ENCODE measurements at regions of chr7 and their contacts with region 1.

Region 1: DNA sequence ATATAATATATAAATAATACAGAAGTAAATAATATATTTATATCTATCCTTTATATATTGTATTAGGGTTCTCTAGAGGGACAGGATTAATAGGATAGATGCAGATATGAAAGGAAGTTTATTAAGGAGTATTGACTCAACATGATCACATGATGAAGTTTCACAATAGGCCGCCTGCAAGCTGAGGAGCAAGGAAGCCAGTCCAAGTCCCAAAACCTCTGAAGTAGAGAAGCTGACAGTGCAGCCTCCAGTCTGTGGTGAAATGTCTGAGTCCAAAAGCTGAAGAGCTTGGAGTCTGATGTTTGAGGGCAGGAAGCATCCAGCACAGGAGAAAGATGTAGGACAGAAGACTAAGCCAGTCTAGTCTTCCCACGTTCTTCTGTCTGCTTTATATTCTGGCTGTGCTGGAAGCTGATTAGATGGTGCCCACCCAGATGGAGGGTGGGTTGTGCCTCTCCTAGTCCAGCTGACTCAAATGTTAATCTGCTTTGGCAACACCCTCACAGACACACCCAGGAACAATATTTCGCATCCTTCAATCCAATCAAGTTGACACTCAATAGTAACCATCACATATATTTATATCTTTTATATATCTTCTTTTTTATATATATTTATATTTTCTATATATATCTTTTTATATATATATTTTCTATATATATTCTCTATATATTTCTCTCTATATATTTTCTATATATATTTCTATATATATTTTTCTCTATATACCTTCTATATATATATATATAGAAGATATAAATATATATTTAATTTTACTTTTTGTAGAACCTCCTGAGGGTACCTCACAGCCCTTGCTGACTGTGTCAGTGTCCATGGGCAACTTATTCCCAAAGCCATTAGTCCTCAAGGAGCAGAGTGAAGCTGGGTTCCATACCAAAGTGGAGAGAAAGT is 24.6 kb upstream of the AKR1B10 start:
- DNase-seq: peak; percentile 41
- H3K4me3 ChIP-seq: no peak overlapping the region
- H3K27ac ChIP-seq: no peak overlapping the region
- H3K4me1 ChIP-seq: no peaks in the 10 kb centered on the region
- H3K27me3 ChIP-seq: no peaks in the 10 kb centered on the region
- CTCF ChIP-seq: no peak
- POLR2A ChIP-seq: no peak

Region 2: GRCh38 chr7:134458806-134459698 is 43.7 kb before region 1 on chr7 and contains the start of gene AKR1B1:
- intact Hi-C with region 1: loop called (anchors 10 kb)
- DNase-seq: peak; percentile 95
- H3K4me3 ChIP-seq: peak within 1 kb of the TSS; percentile 92 to 93
- H3K27ac ChIP-seq: peak within 1 kb of the TSS; percentile 90 to 94
- H3K4me1 ChIP-seq: peaks cover 13% of the 10 kb centered on the region
- H3K27me3 ChIP-seq: no peaks in the 10 kb centered on the region
- CTCF ChIP-seq: peak; percentile 47 to 61 (median 61)
- POLR2A ChIP-seq: no peak
- total RNA-seq, gene AKR1B1: 99.8 to 105 TPM

Region 3: DNA sequence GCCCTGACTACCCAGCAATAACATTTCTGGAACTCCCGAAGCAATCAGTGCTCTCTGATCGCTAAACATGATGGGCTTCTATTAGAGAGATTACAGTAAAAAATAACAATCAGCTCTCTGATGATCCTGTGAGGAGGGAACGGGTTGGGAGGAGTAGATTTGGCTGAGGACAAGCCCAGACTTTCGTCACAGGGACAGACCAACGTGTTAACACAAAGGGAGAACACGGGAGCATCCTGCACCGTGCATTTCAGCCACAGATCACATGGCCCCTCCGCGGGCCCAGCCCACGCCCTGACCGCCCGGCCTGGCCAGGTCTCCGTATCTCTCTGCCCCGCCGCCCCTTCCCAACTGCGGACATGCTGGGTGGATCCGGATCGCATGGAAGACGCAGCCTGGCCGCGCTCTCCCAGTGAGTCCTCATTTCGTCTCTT is 388.6 kb after region 1 on chr7:
- intact Hi-C with region 1: no loop called
- DNase-seq: peak; percentile 96
- H3K4me3 ChIP-seq: peak overlapping the region; percentile 55 to 64
- H3K27ac ChIP-seq: peak overlapping the region; percentile 84 to 91
- H3K4me1 ChIP-seq: peaks cover 16% of the 10 kb centered on the region
- H3K27me3 ChIP-seq: no peaks in the 10 kb centered on the region
- CTCF ChIP-seq: no peak
- POLR2A ChIP-seq: no peak

Measured in testis (tissue), 5 donors.